ENCODE measurements at regions of chr18 and their contacts with region 1.

Region 1: DNA sequence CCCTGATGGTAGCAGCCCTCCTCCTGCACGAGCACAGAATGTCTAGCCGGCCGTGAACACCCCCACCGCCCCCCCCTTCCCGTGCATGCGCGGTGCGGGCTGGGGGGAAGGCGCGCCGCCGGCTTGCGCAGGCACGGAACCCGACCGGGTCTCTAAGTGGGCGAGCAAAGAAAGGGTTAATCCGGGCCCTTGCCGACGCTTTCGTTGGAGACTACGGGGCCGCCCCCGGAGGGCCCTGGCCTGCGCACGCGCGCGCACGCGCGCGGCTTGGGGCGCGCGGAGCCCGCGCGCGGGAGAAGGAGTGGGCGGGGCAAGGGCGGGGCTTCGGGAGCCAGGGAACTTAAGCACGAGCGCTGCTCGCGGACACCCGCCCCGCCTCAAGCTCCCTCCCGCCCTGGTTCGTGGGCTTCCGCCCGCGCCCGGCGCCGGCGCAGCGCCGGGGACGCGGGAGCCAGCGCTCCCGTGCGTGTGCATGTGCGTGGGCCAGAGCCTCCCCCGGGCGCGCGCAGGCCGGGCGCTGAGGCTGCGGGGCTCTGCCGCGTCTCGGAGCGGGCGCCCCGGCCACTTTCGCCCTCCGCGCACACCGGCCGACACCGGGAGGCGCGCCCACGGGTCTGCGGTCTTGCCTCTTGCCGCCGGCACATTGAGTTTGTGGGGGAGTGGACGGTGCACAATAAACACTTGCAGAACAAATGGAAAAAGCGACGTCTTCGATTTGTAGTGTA is 617 bp upstream of the ZBTB14 start:
- DNase-seq: peak; percentile 99
- ATAC-seq: peak; percentile 66
- H3K4me3 ChIP-seq: peak overlapping the region; percentile 65 to 84 (median 72)
- H3K4me3 Mint-ChIP-seq: peak overlapping the region; percentile 88
- H3K27ac ChIP-seq: peak overlapping the region; percentile 81 to 86
- H3K27ac Mint-ChIP-seq: peak overlapping the region; percentile 89
- H3K4me1 ChIP-seq: peaks cover 18 to 20% of the 10 kb centered on the region in 2 donors
- H3K4me1 Mint-ChIP-seq: peaks cover 20% of the 10 kb centered on the region
- H3K27me3 ChIP-seq: peaks cover 0 to 7% (median 2%) of the 10 kb centered on the region in 4 experiments
- H3K27me3 Mint-ChIP-seq: peaks cover 11% of the 10 kb centered on the region
- CTCF ChIP-seq: no peak

Region 2: DNA sequence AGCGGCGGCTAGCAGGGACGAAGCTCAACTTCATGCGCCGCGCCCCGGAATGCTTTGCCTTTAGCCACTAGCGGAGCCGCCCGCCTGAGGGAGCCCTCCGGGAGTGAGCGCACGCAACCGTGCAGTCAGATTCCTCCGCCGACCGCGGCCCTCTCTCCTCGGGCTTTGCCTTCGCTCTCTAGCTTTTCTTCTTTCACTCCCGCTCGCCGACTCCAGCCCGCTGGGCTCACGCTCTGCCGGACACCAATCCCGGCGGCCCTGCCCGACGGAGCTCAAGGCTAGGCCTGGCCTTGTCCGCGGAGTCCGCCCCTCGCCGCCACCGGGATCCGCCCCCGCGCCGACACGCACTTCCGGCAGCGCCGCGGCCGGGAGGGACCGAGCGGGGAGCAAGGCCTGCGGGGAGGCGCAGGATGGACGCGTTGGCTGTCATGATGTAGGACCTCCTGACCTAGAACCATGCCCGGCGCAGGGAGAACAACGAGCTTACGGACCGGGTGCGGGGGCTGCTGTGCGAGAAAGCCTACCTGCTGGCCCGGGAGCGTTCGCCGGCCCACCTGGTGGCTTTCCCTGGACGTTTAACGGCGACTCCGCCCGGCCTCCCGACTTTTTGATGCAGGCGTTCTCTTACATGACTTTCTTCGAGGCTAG is 58.3 kb before region 1 on chr18:
- CTCF ChIA-PET with region 1: interaction called, 19 read pairs
- POLR2A ChIA-PET with region 1: interaction called, 57 read pairs
- intact Hi-C with region 1: loop called (anchors 1 kb)
- DNase-seq: peak; percentile 93
- ATAC-seq: peak; percentile 89
- H3K4me3 ChIP-seq: peak overlapping the region; percentile 81 to 90 (median 87)
- H3K4me3 Mint-ChIP-seq: peak overlapping the region; percentile 99
- H3K27ac ChIP-seq: peak overlapping the region; percentile 89 to 94
- H3K27ac Mint-ChIP-seq: peak overlapping the region; percentile 99
- H3K4me1 ChIP-seq: peaks cover 12 to 18% of the 10 kb centered on the region in 2 donors
- H3K4me1 Mint-ChIP-seq: peaks cover 33% of the 10 kb centered on the region
- H3K27me3 ChIP-seq: peaks cover 0 to 3% (median under 1%) of the 10 kb centered on the region in 4 experiments
- H3K27me3 Mint-ChIP-seq: peaks cover 8% of the 10 kb centered on the region
- CTCF ChIP-seq: no peak

Region 3: GRCh38 chr18:5309888-5310470 is 13.8 kb after region 1 on chr18:
- CTCF ChIA-PET with region 1: interaction called, 4 read pairs
- POLR2A ChIA-PET with region 1: interaction called, 7 read pairs
- intact Hi-C with region 1: loop called (anchors 1 kb)
- DNase-seq: peak; percentile 70
- ATAC-seq: peak; percentile 98
- H3K4me3 ChIP-seq: peak overlapping the region; percentile 24 to 59 (median 48)
- H3K4me3 Mint-ChIP-seq: peak overlapping the region; percentile 84
- H3K27ac ChIP-seq: peak overlapping the region; percentile 71 to 74
- H3K27ac Mint-ChIP-seq: peak overlapping the region; percentile 90
- H3K4me1 ChIP-seq: peaks cover 7 to 11% of the 10 kb centered on the region in 2 donors
- H3K4me1 Mint-ChIP-seq: peaks cover 25% of the 10 kb centered on the region
- H3K27me3 ChIP-seq: no peaks in the 10 kb centered on the region
- H3K27me3 Mint-ChIP-seq: no peaks in the 10 kb centered on the region
- CTCF ChIP-seq: no peak

Region 4: DNA sequence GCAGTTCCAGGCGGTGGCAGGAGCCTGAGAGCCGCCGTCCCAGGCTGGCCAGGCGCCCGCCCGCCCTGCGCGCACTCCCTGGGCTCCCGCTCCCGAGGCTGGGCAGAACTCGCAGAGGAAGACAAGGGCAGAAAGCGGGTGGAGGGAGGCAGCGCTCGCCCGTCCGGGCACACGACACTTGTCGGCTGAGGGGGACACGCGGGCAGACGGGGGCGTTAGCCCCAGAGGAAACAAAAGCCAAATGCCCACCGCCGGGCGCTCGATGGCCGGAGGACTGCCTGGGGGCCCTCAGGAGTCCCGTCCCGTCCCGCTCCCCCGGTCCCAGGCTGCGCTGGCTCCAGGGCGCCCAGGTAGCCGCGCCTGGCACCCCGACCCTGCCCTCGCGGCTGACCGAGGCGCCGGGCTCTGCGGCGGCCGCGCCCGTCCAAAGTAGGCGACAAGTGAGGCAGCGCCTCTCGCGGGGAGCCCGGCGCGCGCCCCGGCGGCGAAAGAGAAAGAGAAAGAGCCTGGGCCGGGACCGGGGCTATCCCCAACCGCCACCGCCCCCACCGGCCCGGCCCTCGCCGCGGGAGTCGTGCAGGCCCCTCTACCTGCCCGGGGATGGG is 1118.1 kb after region 1 on chr18:
- CTCF ChIA-PET with region 1: no interaction called
- POLR2A ChIA-PET with region 1: no interaction called
- intact Hi-C with region 1: loop called (anchors 10 kb)
- DNase-seq: peak; percentile 78
- ATAC-seq: peak; percentile 80
- H3K4me3 ChIP-seq: peak overlapping the region in 4 of 5 experiments; percentile 52 to 86 (median 75)
- H3K4me3 Mint-ChIP-seq: peak overlapping the region; percentile 86
- H3K27ac ChIP-seq: peak overlapping the region; percentile 53 to 81
- H3K27ac Mint-ChIP-seq: peak overlapping the region; percentile 84
- H3K4me1 ChIP-seq: peaks cover 22 to 24% of the 10 kb centered on the region in 2 donors
- H3K4me1 Mint-ChIP-seq: peaks cover 30% of the 10 kb centered on the region
- H3K27me3 ChIP-seq: no peaks in the 10 kb centered on the region
- H3K27me3 Mint-ChIP-seq: peaks cover 6% of the 10 kb centered on the region
- CTCF ChIP-seq: no peak

Measured in B cell (primary cell).